ENCODE measurements at regions of chr2 and their contacts with region 1.

Region 1: DNA sequence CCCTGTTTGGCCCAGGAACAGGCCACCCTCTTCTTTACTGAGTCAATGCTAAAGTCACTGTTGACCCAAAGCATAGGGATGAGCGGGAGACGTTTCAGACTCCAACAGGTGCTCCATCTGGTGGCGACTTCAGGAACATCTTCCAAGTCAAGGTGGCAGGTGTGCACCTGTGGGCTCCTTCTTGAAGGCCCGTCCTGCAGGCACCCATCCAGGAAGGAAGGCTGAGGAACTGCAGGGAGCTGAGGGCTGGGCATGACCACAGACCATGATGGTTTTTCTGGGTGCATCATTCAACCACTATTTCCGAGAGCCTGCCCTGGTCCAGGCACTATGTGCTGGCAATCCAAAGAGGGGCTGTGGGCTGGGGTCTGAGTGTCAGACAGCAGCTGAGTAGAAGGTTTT is 142.8 kb downstream of the NDUFA10 start:
- DNase-seq: peak; percentile 58 to 59
- H3K4me3 ChIP-seq: no peak overlapping the region
- H3K27ac ChIP-seq: peak overlapping the region in 1 of 2 donors; percentile 57
- H3K4me1 ChIP-seq: no peaks in the 10 kb centered on the region
- H3K27me3 ChIP-seq: no peaks in the 10 kb centered on the region
- CTCF ChIP-seq: peak; percentile 49 to 73 (median 65)
- POLR2A ChIP-seq: no peak

Region 2: GRCh38 chr2:239035361-239036078 is 846.8 kb before region 1 on chr2:
- intact Hi-C with region 1: loop called (anchors 10 kb)
- DNase-seq: peak in 1 of 2 donors; percentile 62
- H3K4me3 ChIP-seq: no peak overlapping the region
- H3K27ac ChIP-seq: no peak overlapping the region
- H3K4me1 ChIP-seq: no peaks in the 10 kb centered on the region
- H3K27me3 ChIP-seq: no peaks in the 10 kb centered on the region
- CTCF ChIP-seq: peak; percentile 63 to 99 (median 82)
- POLR2A ChIP-seq: no peak

Region 3: GRCh38 chr2:240189686-240190085 is 307.4 kb after region 1 on chr2:
- intact Hi-C with region 1: no loop called
- DNase-seq: no peak
- H3K4me3 ChIP-seq: no peak overlapping the region
- H3K27ac ChIP-seq: no peak overlapping the region
- H3K4me1 ChIP-seq: no peaks in the 10 kb centered on the region
- H3K27me3 ChIP-seq: no peaks in the 10 kb centered on the region
- CTCF ChIP-seq: no peak
- POLR2A ChIP-seq: no peak